Left cardiac atrium (tissue), 4 donors: ENCODE measurements at regions of chr1 and their contacts with region 1.

Region 1: GRCh38 chr1:186482661-186483255 is 21.8 kb upstream of the PDC start:
- DNase-seq: peak; percentile 39
- ATAC-seq: peak in 1 of 2 donors; percentile 75

Region 2: DNA sequence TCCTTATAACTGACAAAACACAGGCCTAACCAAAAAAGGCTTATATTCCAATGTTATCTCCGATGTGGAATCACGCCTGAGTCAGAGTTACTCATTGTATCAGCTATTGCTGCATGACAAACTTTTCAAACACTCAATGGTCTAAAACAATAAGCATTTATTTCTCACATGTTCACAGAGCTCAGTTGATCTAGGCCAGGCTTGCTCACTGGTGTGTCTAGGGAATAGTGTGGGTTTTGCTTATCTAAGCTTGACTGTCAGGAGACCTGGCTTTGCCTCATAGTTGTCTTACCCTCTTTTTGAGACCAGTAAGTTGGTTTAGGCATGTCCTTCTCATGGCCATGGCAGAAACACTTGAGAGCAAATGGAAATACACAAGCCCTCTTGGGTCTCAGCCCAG is 617.9 kb before region 1 on chr1:
- intact Hi-C with region 1: no loop called
- DNase-seq: no peak
- ATAC-seq: peak in 1 of 2 donors; percentile 94

Region 3: GRCh38 chr1:186605762-186606350 is 123.1 kb after region 1 on chr1:
- intact Hi-C with region 1: loop called in 1 of 2 experiments (anchors 10 kb)
- DNase-seq: peak; percentile 36
- ATAC-seq: peak; percentile 67